Activated CD4-positive, alpha-beta T cell treated with anti-CD3 and anti-CD28 coated beads, Interleukin-2, amount 10 ng/mL, durations not matched to agents 7 days and 5 days (primary cell): ENCODE measurements at regions of chr2 and their contacts with region 1.

Region 1: DNA sequence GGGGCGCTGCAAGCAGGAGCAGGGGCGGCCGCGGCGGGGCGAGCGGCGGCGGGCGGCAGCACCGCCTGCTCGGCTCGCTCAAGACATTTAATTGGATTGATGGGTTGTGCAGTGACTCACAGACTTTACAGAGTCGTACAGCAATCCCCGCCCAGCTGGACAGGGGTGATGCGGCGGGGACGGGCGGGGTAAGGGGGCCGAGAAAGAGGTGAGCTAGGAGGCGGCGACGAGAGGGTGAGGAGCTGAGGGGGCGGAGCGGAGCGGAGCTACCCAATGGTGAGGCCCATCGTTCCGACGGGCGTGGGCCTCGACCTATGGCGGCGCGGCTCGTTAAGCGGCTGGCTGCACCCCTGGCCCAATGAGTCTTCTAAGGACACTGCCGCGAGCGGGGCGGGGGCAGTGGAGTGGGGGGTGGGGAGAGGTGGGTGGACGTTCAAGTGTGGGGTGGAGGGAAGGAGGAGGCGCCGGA is 97.1 kb upstream of the SERTAD2 start:
- DNase-seq: peak; percentile 97
- H3K4me3 Mint-ChIP-seq: peak overlapping the region; percentile 98
- H3K27ac Mint-ChIP-seq: peak overlapping the region; percentile 98
- H3K4me1 Mint-ChIP-seq: peaks cover 26% of the 10 kb centered on the region
- H3K27me3 Mint-ChIP-seq: no peaks in the 10 kb centered on the region

Region 2: DNA sequence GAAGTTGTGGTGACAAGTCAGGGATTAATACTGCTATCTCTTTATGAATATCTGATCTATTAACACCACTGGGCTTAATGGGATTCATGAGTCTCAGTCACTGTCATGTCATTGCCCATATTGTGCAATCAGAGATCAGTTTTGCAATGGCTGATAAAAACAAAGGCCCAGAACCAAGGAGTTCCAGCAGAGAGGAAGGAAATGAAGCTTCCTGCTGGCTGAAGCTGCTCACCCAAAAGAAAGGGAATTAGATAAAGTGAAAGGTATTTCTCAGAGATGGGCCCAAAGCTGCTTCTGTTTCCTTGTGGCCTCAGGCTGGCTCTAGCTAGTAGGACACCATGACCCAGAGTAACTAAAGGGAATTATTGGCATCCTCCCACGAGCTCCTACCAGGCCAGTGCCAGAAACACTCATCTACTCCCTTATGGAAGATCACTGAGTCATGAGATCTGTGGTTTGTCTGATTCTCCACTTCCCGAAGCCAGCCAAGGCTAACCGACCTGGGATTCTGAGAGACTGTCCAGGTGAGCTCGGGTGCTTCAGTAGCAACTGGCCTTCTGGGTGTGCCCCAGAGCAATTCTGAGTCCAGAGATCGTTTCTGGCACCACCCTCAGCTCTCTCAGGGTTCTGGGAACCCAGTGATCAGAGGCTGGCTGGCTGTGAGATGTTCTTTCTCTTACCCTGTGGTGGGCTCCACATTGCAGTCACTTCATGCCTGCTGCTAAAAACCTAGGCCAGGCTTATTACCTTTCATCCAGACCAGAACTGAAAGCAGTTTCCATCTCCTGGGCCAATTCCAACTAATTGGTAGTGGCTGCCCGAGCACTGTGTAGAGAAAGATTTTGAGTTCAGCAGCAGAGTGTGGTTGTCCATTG is 477.1 kb before region 1 on chr2:
- CTCF ChIA-PET with region 1: no interaction called
- POLR2A ChIA-PET with region 1: no interaction called
- DNase-seq: no peak
- H3K4me3 Mint-ChIP-seq: no peak overlapping the region
- H3K27ac Mint-ChIP-seq: no peak overlapping the region
- H3K4me1 Mint-ChIP-seq: peaks cover 21% of the 10 kb centered on the region
- H3K27me3 Mint-ChIP-seq: peaks cover 2% of the 10 kb centered on the region

Region 3: DNA sequence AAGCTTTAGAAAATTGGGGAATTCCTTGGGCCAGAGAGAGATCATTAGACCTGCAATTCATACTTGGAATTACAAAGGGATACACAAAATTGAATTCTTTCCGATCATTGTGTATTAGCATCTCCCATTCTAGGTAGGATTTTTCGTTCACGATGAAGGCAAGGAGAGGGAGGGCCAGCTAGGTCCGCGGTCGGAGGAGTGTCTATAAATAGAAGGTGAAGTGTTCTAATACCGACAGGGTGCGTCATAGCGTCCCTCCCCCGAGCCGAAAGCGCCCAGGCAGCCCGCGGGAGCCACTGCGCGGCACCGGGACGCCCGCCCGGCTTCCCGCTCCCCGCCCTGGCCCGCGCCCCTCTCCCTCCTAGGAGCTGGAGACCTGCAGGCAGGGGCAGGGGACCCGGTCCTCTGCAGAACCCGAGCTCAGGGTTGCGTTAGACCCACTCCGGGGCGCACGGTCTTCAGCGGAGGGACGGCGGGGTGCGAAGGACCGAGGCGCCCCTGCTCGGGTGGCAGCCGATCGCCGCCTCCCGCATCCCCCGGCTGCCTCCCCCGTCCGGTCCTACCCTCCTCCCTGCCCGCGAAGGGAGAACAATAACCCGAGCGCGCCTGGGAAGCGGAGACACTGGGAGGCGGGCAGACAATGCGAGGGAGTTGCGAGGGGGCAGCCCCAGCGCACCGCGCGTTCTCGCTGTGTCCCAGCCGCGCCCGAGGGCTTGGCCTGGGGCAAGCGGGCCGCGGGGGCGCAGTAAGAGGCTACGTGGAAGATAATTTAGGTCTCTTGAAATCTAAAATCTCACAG is 17.0 kb after region 1 on chr2:
- CTCF ChIA-PET with region 1: interaction called, 49 read pairs
- POLR2A ChIA-PET with region 1: interaction called, 5 read pairs
- DNase-seq: peak; percentile 76
- H3K4me3 Mint-ChIP-seq: peak overlapping the region; percentile 87
- H3K27ac Mint-ChIP-seq: peak overlapping the region; percentile 96
- H3K4me1 Mint-ChIP-seq: peaks cover 31% of the 10 kb centered on the region
- H3K27me3 Mint-ChIP-seq: peaks cover 4% of the 10 kb centered on the region